CD8-positive, alpha-beta T cell (primary cell): ENCODE measurements at regions of chr6 and their contacts with region 1.

Region 1: GRCh38 chr6:33454009-33454946 is at the start of gene ZBTB9:
- DNase-seq: peak; percentile 86 to 96 (median 93)
- ATAC-seq: peak; percentile 98
- H3K4me3 ChIP-seq: peak within 1 kb of the TSS; percentile 92 to 93
- H3K4me3 Mint-ChIP-seq: peak within 1 kb of the TSS; percentile 98
- H3K27ac ChIP-seq: peak within 1 kb of the TSS; percentile 75 to 81
- H3K27ac Mint-ChIP-seq: peak within 1 kb of the TSS; percentile 97
- H3K4me1 ChIP-seq: peaks cover 23% of the 10 kb centered on the region
- H3K4me1 Mint-ChIP-seq: peaks cover 43% of the 10 kb centered on the region
- H3K27me3 ChIP-seq: no peaks in the 10 kb centered on the region
- H3K27me3 Mint-ChIP-seq: no peaks in the 10 kb centered on the region
- CTCF ChIP-seq: no peak
- total RNA-seq, gene ZBTB9: 7.1 to 9.5 TPM

Region 2: GRCh38 chr6:33410050-33410710 is 44.1 kb before region 1 on chr6:
- CTCF ChIA-PET with region 1: no interaction called
- POLR2A ChIA-PET with region 1: interaction called, 3 read pairs
- intact Hi-C with region 1: loop called in 1 of 2 experiments (anchors 1 kb)
- DNase-seq: peak; percentile 93 to 99 (median 99)
- ATAC-seq: peak; percentile 68
- H3K4me3 ChIP-seq: peak overlapping the region; percentile 82 to 95
- H3K4me3 Mint-ChIP-seq: peak overlapping the region; percentile 88
- H3K27ac ChIP-seq: peak overlapping the region; percentile 94 to 96
- H3K27ac Mint-ChIP-seq: peak overlapping the region; percentile 91
- H3K4me1 ChIP-seq: peaks cover 40% of the 10 kb centered on the region
- H3K4me1 Mint-ChIP-seq: peaks cover 47% of the 10 kb centered on the region
- H3K27me3 ChIP-seq: no peaks in the 10 kb centered on the region
- H3K27me3 Mint-ChIP-seq: no peaks in the 10 kb centered on the region
- CTCF ChIP-seq: no peak

Region 3: GRCh38 chr6:33430991-33431879 is 23.0 kb before region 1 on chr6:
- CTCF ChIA-PET with region 1: interaction called, 14 read pairs
- POLR2A ChIA-PET with region 1: interaction called, 27 read pairs
- intact Hi-C with region 1: loop called (anchors 1 kb)
- DNase-seq: peak; percentile 77 to 93 (median 88)
- ATAC-seq: peak; percentile 59
- H3K4me3 ChIP-seq: peak overlapping the region; percentile 38 to 53
- H3K4me3 Mint-ChIP-seq: peak overlapping the region; percentile 93
- H3K27ac ChIP-seq: peak overlapping the region; percentile 53 to 81
- H3K27ac Mint-ChIP-seq: peak overlapping the region; percentile 94
- H3K4me1 ChIP-seq: peaks cover 56% of the 10 kb centered on the region
- H3K4me1 Mint-ChIP-seq: peaks cover 64% of the 10 kb centered on the region
- H3K27me3 ChIP-seq: no peaks in the 10 kb centered on the region
- H3K27me3 Mint-ChIP-seq: no peaks in the 10 kb centered on the region
- CTCF ChIP-seq: no peak

Region 4: DNA sequence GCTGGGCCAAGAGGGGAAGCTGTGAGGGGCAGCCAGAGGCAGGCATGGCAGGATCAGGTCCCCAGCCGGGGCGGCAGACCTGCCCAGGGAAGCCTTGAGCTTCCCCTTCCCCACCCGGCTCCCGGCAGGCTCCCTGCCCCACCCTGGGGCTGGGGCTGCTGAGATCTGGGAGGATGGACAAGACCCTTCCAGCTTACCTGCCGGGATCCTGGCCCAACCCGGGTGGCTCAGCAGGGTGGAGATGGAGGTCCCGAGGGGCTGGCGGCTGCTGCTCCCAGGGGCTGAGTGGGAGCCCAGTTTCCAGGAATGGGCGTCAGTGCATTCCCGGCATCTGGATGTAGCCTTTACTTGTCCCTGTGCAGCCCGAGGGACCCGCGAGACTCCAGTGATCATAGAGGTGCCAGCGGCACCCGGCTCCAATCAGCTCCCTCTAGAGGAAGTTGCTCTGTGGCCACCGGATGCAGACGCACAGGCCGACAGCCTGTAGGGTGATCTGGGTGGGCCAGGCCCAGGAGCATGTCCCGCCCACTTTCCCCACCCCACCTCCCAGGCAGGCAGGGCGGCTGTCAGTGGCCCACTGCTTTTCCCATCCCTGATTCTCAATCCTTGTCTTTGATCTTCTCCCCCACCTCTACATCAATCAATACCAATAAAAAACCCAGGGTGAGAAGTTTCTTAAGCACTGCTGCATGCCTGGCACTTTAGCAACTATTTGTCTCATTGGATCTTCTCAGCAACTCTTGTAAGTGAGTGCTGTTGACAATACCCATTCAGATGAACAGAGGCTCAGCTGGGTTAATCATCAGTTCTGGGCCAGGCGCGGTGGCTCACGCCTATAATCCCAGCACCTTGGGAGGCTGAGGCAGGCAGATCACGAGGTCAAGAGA is 125.8 kb after region 1 on chr6 and contains the start of gene BAK1:
- CTCF ChIA-PET with region 1: interaction called, 3 read pairs
- POLR2A ChIA-PET with region 1: interaction called, 3 read pairs
- intact Hi-C with region 1: loop called (anchors 1 kb)
- DNase-seq: peak; percentile 59 to 94 (median 85)
- ATAC-seq: peak; percentile 94
- H3K4me3 ChIP-seq: peak within 1 kb of the TSS; percentile 97 to 98
- H3K4me3 Mint-ChIP-seq: peak within 1 kb of the TSS; percentile 93
- H3K27ac ChIP-seq: peak within 1 kb of the TSS; percentile 85 to 87
- H3K27ac Mint-ChIP-seq: peak within 1 kb of the TSS; percentile 98
- H3K4me1 ChIP-seq: peaks cover 29% of the 10 kb centered on the region
- H3K4me1 Mint-ChIP-seq: peaks cover 31% of the 10 kb centered on the region
- H3K27me3 ChIP-seq: no peaks in the 10 kb centered on the region
- H3K27me3 Mint-ChIP-seq: no peaks in the 10 kb centered on the region
- CTCF ChIP-seq: peak; percentile 44
- total RNA-seq, gene BAK1: 44.8 to 46.5 TPM

Region 5: DNA sequence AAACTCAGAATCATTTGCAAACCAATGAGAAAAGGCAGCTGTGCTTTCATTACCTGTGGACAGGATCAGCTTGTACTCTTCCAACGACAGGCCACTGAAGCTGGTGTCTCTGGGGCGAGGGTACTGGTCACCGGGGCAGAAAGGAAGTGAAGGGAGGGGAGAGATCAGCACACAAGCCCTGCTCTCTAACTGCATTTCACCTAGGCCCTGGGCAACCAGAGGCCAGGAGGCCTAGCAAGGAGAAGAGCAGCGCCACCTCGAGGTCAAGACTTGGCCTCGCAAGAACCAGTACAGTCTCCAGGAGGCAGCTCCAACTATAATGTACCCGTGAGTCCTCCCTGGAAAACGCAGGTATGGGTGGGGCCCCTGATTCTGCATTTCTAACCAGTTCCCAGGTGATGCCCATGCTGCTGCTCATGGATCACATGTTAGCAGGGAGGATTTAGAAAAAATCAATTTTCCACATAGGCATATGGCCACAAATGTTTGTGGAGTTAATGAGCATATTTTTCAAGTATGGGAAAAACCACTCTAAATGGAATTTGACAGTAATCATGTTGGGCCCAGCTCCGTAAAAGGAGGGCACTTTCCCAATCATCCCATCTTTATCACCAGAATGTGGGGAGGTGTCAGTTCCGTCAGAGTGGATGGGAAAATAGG is 246.2 kb after region 1 on chr6:
- CTCF ChIA-PET with region 1: no interaction called
- POLR2A ChIA-PET with region 1: no interaction called
- intact Hi-C with region 1: loop called in 1 of 2 experiments (anchors 10 kb)
- DNase-seq: peak; percentile 46 to 84 (median 78)
- ATAC-seq: peak; percentile 71
- H3K4me3 ChIP-seq: no peak overlapping the region
- H3K4me3 Mint-ChIP-seq: no peak overlapping the region
- H3K27ac ChIP-seq: peak overlapping the region in 1 of 2 experiments; percentile 48
- H3K27ac Mint-ChIP-seq: peak overlapping the region; percentile 60
- H3K4me1 ChIP-seq: peaks cover 31% of the 10 kb centered on the region
- H3K4me1 Mint-ChIP-seq: peaks cover 35% of the 10 kb centered on the region
- H3K27me3 ChIP-seq: no peaks in the 10 kb centered on the region
- H3K27me3 Mint-ChIP-seq: no peaks in the 10 kb centered on the region
- CTCF ChIP-seq: peak; percentile 63